MCF 10A (cell line): ENCODE measurements at regions of chr5 and their contacts with region 1.

Region 1: GRCh38 chr5:176543428-176544173 is 5.5 kb upstream of the CDHR2 start:
- DNase-seq: peak; percentile 75
- H3K4me3 Mint-ChIP-seq: peak overlapping the region; percentile 82
- H3K27ac Mint-ChIP-seq: peak overlapping the region; percentile 50
- H3K4me1 Mint-ChIP-seq: peaks cover 30% of the 10 kb centered on the region
- H3K27me3 Mint-ChIP-seq: no peaks in the 10 kb centered on the region
- CTCF ChIP-seq: no peak

Region 2: GRCh38 chr5:176319827-176320554 is 223.6 kb before region 1 on chr5:
- CTCF ChIA-PET with region 1: no interaction called
- POLR2A ChIA-PET with region 1: no interaction called
- intact Hi-C with region 1: no loop called
- DNase-seq: peak; percentile 25
- H3K4me3 Mint-ChIP-seq: no peak overlapping the region
- H3K27ac Mint-ChIP-seq: no peak overlapping the region
- H3K4me1 Mint-ChIP-seq: no peaks in the 10 kb centered on the region
- H3K27me3 Mint-ChIP-seq: no peaks in the 10 kb centered on the region
- CTCF ChIP-seq: peak; percentile 15

Region 3: GRCh38 chr5:176466245-176466871 is 77.2 kb before region 1 on chr5:
- CTCF ChIA-PET with region 1: interaction called, 11 read pairs
- POLR2A ChIA-PET with region 1: interaction called, 70 read pairs
- intact Hi-C with region 1: no loop called
- DNase-seq: peak; percentile 84
- H3K4me3 Mint-ChIP-seq: peak overlapping the region; percentile 11
- H3K27ac Mint-ChIP-seq: peak overlapping the region; percentile 24
- H3K4me1 Mint-ChIP-seq: peaks cover 35% of the 10 kb centered on the region
- H3K27me3 Mint-ChIP-seq: no peaks in the 10 kb centered on the region
- CTCF ChIP-seq: no peak

Region 4: DNA sequence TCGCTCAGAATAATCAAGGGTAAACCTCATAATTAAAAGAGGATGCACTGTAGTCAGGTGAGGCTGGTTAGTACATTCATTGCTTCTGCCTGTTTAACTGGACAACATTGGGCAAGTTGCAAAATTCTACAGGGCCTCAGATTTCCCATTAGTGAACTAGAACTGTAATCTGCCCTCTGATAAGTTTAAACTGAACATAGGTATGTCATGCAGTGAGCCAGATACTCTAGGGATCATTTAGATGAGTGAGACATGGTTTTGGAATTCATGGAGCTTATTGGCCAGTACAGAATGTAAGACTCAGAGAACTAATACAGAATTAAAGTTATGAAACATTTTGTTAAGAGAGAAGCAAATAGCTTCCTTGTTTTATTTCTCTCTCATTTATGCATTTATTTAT is 42.3 kb before region 1 on chr5:
- CTCF ChIA-PET with region 1: no interaction called
- POLR2A ChIA-PET with region 1: interaction called, 154 read pairs
- intact Hi-C with region 1: loop called (anchors 2 kb)
- DNase-seq: no peak
- H3K4me3 Mint-ChIP-seq: no peak overlapping the region
- H3K27ac Mint-ChIP-seq: no peak overlapping the region
- H3K4me1 Mint-ChIP-seq: peaks cover 6% of the 10 kb centered on the region
- H3K27me3 Mint-ChIP-seq: no peaks in the 10 kb centered on the region
- CTCF ChIP-seq: no peak

Region 5: GRCh38 chr5:176514244-176514950 is 29.2 kb before region 1 on chr5:
- CTCF ChIA-PET with region 1: no interaction called
- POLR2A ChIA-PET with region 1: no interaction called
- intact Hi-C with region 1: no loop called
- DNase-seq: no peak
- H3K4me3 Mint-ChIP-seq: no peak overlapping the region
- H3K27ac Mint-ChIP-seq: no peak overlapping the region
- H3K4me1 Mint-ChIP-seq: no peaks in the 10 kb centered on the region
- H3K27me3 Mint-ChIP-seq: no peaks in the 10 kb centered on the region
- CTCF ChIP-seq: no peak

Region 6: GRCh38 chr5:176573564-176574296 is 30.1 kb after region 1 on chr5:
- CTCF ChIA-PET with region 1: interaction called, 19 read pairs
- POLR2A ChIA-PET with region 1: interaction called, 18 read pairs
- intact Hi-C with region 1: loop called (anchors 2 kb)
- DNase-seq: peak; percentile 77
- H3K4me3 Mint-ChIP-seq: no peak overlapping the region
- H3K27ac Mint-ChIP-seq: no peak overlapping the region
- H3K4me1 Mint-ChIP-seq: peaks cover 14% of the 10 kb centered on the region
- H3K27me3 Mint-ChIP-seq: peaks cover 18% of the 10 kb centered on the region
- CTCF ChIP-seq: peak; percentile 94

Region 7: DNA sequence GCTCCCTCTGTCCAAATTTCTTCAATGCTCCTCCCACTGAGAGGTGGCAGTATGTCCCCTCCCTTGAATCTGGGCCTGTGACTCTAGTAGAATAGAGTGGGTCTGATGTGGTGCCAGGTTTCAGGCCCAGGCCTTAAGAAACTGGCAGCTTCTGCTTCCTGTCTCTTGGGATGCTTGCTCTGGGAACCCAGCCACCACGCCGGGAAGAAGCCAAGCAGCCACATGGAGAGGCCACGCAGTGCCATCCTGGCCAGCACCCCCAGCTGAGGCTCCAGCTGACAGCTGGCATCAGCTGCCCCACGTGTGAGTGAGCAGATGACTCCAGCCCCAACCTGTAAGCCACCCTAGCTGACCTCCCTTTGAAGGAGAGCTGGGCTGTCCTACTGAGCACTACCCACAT is 96.4 kb after region 1 on chr5:
- CTCF ChIA-PET with region 1: no interaction called
- POLR2A ChIA-PET with region 1: no interaction called
- intact Hi-C with region 1: no loop called
- DNase-seq: no peak
- H3K4me3 Mint-ChIP-seq: no peak overlapping the region
- H3K27ac Mint-ChIP-seq: no peak overlapping the region
- H3K4me1 Mint-ChIP-seq: no peaks in the 10 kb centered on the region
- H3K27me3 Mint-ChIP-seq: peaks cover 7% of the 10 kb centered on the region
- CTCF ChIP-seq: no peak